CD4-positive, alpha-beta memory T cell (primary cell): ENCODE measurements at regions of chr10 and their contacts with region 1.

Region 1: GRCh38 chr10:95430231-95430951 is 130.8 kb downstream of the SORBS1 start:
- DNase-seq: peak in 4 of 5 donors; percentile 35 to 46 (median 42)
- H3K4me3 ChIP-seq: no peak overlapping the region
- H3K4me3 Mint-ChIP-seq: no peak overlapping the region
- H3K27ac ChIP-seq: no peak overlapping the region
- H3K27ac Mint-ChIP-seq: no peak overlapping the region
- H3K4me1 ChIP-seq: no peaks in the 10 kb centered on the region
- H3K4me1 Mint-ChIP-seq: no peaks in the 10 kb centered on the region
- H3K27me3 ChIP-seq: no peaks in the 10 kb centered on the region
- H3K27me3 Mint-ChIP-seq: no peaks in the 10 kb centered on the region

Region 2: GRCh38 chr10:95408983-95409873 is 21.2 kb before region 1 on chr10:
- CTCF ChIA-PET with region 1: interaction called, 48 read pairs
- POLR2A ChIA-PET with region 1: no interaction called
- intact Hi-C with region 1: no loop called
- DNase-seq: no peak
- H3K4me3 ChIP-seq: no peak overlapping the region
- H3K4me3 Mint-ChIP-seq: no peak overlapping the region
- H3K27ac ChIP-seq: no peak overlapping the region
- H3K27ac Mint-ChIP-seq: no peak overlapping the region
- H3K4me1 ChIP-seq: no peaks in the 10 kb centered on the region
- H3K4me1 Mint-ChIP-seq: no peaks in the 10 kb centered on the region
- H3K27me3 ChIP-seq: no peaks in the 10 kb centered on the region
- H3K27me3 Mint-ChIP-seq: no peaks in the 10 kb centered on the region

Region 3: GRCh38 chr10:95445837-95446486 is 15.6 kb after region 1 on chr10:
- CTCF ChIA-PET with region 1: interaction called, 158 read pairs
- POLR2A ChIA-PET with region 1: no interaction called
- intact Hi-C with region 1: no loop called
- DNase-seq: peak in 4 of 5 donors; percentile 3 to 15 (median 12)
- H3K4me3 ChIP-seq: no peak overlapping the region
- H3K4me3 Mint-ChIP-seq: no peak overlapping the region
- H3K27ac ChIP-seq: no peak overlapping the region
- H3K27ac Mint-ChIP-seq: no peak overlapping the region
- H3K4me1 ChIP-seq: no peaks in the 10 kb centered on the region
- H3K4me1 Mint-ChIP-seq: peaks cover 3 to 5% (median 4%) of the 10 kb centered on the region in 4 donors
- H3K27me3 ChIP-seq: no peaks in the 10 kb centered on the region
- H3K27me3 Mint-ChIP-seq: peaks cover 2 to 4% of the 10 kb centered on the region in 2 donors

Region 4: GRCh38 chr10:95601116-95601719 is 170.8 kb after region 1 on chr10:
- CTCF ChIA-PET with region 1: interaction called, 168 read pairs
- POLR2A ChIA-PET with region 1: interaction called, 3 read pairs
- intact Hi-C with region 1: no loop called
- DNase-seq: peak in 4 of 5 donors; percentile 18 to 41 (median 31)
- H3K4me3 ChIP-seq: no peak overlapping the region
- H3K4me3 Mint-ChIP-seq: no peak overlapping the region
- H3K27ac ChIP-seq: no peak overlapping the region
- H3K27ac Mint-ChIP-seq: peak overlapping the region in 2 of 7 donors; percentile 18 to 50
- H3K4me1 ChIP-seq: no peaks in the 10 kb centered on the region
- H3K4me1 Mint-ChIP-seq: peaks cover 0 to 1% (median 0%) of the 10 kb centered on the region in 4 donors
- H3K27me3 ChIP-seq: no peaks in the 10 kb centered on the region
- H3K27me3 Mint-ChIP-seq: peaks cover 4% of the 10 kb centered on the region in 2 donors